Activated CD4-positive, alpha-beta memory T cell treated with anti-CD3 and anti-CD28 coated beads for 36 hours (primary cell): ENCODE measurements at regions of chr22 and their contacts with region 1.

Region 1: DNA sequence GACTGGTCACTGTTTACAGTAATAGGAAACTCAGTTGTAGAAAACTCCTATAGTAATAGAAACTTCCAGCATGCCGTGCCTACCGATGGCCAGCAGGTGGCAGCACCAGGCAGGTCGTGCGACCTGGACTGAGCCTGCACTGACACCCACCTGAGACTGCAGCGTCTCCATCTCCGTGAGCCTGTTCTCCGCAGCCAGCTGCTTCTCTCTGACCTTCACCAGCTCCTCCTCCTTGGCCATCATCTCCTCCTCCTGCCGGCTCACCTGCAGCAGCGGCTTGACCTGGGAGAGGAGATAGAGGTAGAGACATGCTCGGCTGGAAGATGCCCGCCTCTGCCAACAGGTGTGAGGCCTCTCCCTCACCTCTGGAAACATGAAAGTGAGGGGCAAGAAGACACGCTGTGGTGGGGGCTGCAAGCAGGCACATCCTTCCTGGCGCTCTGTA is 48.5 kb downstream of the APOL1 start:
- DNase-seq: peak; percentile 88
- H3K4me3 Mint-ChIP-seq: no peak overlapping the region
- H3K27ac Mint-ChIP-seq: peak overlapping the region; percentile 67
- H3K4me1 Mint-ChIP-seq: peaks cover 8% of the 10 kb centered on the region
- H3K27me3 Mint-ChIP-seq: no peaks in the 10 kb centered on the region

Region 2: GRCh38 chr22:36286471-36287224 is 14.8 kb before region 1 on chr22:
- CTCF ChIA-PET with region 1: interaction called, 57 read pairs
- POLR2A ChIA-PET with region 1: interaction called, 5 read pairs
- intact Hi-C with region 1: no loop called
- DNase-seq: peak; percentile 77
- H3K4me3 Mint-ChIP-seq: peak overlapping the region; percentile 4
- H3K27ac Mint-ChIP-seq: peak overlapping the region; percentile 60
- H3K4me1 Mint-ChIP-seq: peaks cover 23% of the 10 kb centered on the region
- H3K27me3 Mint-ChIP-seq: no peaks in the 10 kb centered on the region

Region 3: DNA sequence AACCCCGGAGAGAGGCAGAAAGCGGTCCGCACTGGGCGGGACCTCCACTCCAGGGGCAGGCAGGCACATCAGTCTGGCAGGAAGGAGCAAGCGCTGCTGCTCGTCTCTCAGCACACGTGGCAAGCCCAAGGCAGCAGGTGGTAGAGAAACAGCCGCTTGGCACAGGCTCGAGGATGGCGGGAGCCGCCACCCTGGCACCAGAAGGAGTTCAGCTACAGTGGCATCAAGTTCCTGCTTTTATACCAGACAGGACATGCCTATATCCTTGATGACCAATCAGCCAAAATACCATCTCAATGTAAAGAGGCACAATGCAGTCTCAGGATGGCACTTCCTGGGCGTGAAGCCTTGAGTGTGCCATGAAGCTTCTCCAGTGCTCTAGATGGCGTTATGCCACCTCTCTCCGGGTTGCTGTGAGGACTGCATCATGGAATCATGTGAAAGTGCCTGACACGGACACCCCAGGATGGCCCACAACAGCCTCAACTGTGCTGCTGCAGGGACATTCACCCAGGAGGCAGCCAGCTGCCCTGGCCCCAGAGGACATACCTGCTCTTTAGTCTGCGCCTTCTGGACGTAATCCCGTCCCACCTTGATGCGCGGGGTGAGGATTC is 16.4 kb after region 1 on chr22:
- CTCF ChIA-PET with region 1: interaction called, 21 read pairs
- POLR2A ChIA-PET with region 1: no interaction called
- intact Hi-C with region 1: no loop called
- DNase-seq: no peak
- H3K4me3 Mint-ChIP-seq: no peak overlapping the region
- H3K27ac Mint-ChIP-seq: peak overlapping the region; percentile 28
- H3K4me1 Mint-ChIP-seq: no peaks in the 10 kb centered on the region
- H3K27me3 Mint-ChIP-seq: no peaks in the 10 kb centered on the region

Region 4: GRCh38 chr22:36387752-36388518 is 86.5 kb after region 1 on chr22 and contains the start of gene MYH9:
- CTCF ChIA-PET with region 1: interaction called, 12 read pairs
- POLR2A ChIA-PET with region 1: interaction called, 3 read pairs
- intact Hi-C with region 1: no loop called
- DNase-seq: peak; percentile 100
- H3K4me3 Mint-ChIP-seq: peak within 1 kb of the TSS; percentile 95
- H3K27ac Mint-ChIP-seq: peak within 1 kb of the TSS; percentile 97
- H3K4me1 Mint-ChIP-seq: peaks cover 32% of the 10 kb centered on the region
- H3K27me3 Mint-ChIP-seq: no peaks in the 10 kb centered on the region
- total RNA-seq, gene MYH9: 712 to 720 TPM

Region 5: GRCh38 chr22:36470162-36470993 is 169.0 kb after region 1 on chr22:
- CTCF ChIA-PET with region 1: interaction called, 142 read pairs
- POLR2A ChIA-PET with region 1: interaction called, 3 read pairs
- intact Hi-C with region 1: loop called (anchors 1 kb)
- DNase-seq: peak; percentile 88
- H3K4me3 Mint-ChIP-seq: no peak overlapping the region
- H3K27ac Mint-ChIP-seq: peak overlapping the region; percentile 57
- H3K4me1 Mint-ChIP-seq: peaks cover 21% of the 10 kb centered on the region
- H3K27me3 Mint-ChIP-seq: no peaks in the 10 kb centered on the region